ENCODE measurements at regions of chr17 and their contacts with region 1.

Region 1: DNA sequence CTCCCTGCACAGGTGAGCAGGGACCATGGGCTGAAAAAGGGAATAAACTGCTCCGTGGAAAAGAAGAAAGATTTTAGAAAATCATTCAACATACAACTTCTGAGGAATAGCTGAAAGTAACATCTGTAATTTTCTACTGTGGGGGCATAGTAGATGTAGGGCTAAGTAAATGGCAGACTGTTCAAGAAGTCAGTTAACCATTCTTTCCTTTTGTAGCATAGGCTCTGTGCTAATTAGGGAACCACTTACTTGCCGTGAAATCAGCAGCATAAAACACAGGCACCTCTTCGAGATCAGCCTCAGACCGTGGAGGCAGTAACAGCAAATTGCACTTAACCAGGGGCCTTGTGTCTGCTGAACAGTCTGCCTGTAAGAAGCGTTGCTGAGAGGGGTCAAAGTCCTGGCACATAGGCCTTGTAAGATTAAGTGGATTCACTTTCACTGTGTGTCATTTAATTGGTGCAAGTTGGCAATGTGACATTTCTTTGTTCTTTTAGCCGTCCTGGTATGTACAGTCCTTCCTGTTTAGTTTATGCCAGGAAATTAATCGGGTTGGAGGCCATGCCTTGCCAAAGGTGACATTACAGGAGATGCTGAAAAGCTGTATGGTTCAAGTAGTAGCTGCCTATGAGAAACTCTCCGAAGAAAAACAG is 10.4 kb downstream of the COG1 start:
- DNase-seq: no peak
- H3K4me3 Mint-ChIP-seq: no peak overlapping the region
- H3K27ac Mint-ChIP-seq: peak overlapping the region; percentile 81
- H3K4me1 Mint-ChIP-seq: peaks cover 25% of the 10 kb centered on the region
- H3K27me3 Mint-ChIP-seq: no peaks in the 10 kb centered on the region

Region 2: GRCh38 chr17:72976971-72977770 is 226.1 kb before region 1 on chr17:
- CTCF ChIA-PET with region 1: no interaction called
- POLR2A ChIA-PET with region 1: no interaction called
- DNase-seq: no peak
- H3K4me3 Mint-ChIP-seq: no peak overlapping the region
- H3K27ac Mint-ChIP-seq: no peak overlapping the region
- H3K4me1 Mint-ChIP-seq: peaks cover 9% of the 10 kb centered on the region
- H3K27me3 Mint-ChIP-seq: no peaks in the 10 kb centered on the region

Region 3: DNA sequence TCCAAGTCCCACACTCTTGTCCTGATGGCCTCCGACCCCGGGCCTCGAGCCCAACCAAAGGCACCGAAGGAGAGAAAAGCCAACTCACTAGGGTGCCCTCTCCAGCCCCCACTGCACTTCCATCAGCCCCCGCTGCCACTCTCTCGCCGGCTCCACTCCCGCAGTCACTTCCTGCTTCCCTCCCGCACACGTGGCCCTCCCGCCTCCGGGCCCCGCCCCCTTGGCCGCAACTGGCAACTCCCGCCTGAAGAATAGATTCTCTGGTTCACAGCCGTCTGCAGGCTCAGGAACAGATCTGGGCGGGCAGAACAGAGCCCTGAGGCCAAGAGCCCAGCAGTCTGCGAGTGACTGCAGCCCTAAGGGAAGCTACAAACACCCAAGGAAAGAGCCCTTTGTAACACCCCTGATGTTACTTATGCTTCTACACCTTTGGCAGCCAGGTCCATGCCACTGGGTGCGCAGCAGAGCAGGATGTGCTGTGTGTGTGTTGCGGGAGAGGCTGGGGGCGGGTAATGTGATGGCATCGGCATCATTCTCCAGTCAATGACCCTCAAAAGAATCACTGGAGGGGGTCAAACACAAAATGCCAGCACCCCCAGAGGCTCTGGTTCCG is 110.6 kb before region 1 on chr17 and contains the start of gene SLC39A11:
- CTCF ChIA-PET with region 1: no interaction called
- POLR2A ChIA-PET with region 1: no interaction called
- DNase-seq: peak; percentile 92
- H3K4me3 Mint-ChIP-seq: peak within 1 kb of the TSS; percentile 97
- H3K27ac Mint-ChIP-seq: peak within 1 kb of the TSS; percentile 93
- H3K4me1 Mint-ChIP-seq: peaks cover 23% of the 10 kb centered on the region
- H3K27me3 Mint-ChIP-seq: peaks cover 8% of the 10 kb centered on the region
- total RNA-seq, gene SLC39A11: 19.5 to 23.4 TPM

Region 4: DNA sequence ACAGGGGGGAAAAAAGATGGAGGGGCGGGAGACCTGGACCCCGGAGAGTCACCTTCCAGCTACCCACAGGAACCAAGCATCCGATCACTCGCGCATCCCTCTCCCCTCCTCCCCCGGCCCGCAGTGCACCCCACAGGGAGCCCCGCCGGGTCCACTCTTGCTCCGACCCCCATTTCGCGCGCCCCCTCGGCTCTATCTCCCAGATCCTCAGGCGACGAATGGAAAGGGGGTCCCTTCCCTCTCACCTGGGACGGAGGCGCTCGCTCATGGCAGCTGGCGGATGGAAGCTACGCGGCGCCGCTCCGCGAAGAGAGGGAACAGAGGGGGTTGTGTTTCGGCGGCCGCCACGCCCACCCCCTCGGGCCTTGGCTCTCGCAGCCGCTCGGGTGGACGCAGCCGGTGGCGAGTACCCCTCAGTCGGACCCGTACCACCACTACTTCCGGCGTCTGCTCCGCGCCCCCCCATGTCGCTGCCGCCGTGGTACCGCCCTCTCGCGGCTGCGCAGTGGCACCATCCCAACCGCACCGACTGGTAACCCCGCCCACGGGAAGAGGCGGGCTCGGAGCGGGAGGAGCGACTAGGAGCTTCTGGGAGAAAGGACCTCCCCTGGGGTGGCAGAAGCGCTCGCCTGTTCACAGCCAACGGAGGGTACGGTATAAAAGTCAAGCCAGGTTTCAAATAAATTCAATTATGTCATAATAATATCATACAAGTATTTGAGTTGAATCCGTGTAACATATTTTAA is 28.8 kb after region 1 on chr17:
- CTCF ChIA-PET with region 1: interaction called, 10 read pairs
- POLR2A ChIA-PET with region 1: interaction called, 3 read pairs
- DNase-seq: peak; percentile 96
- H3K4me3 Mint-ChIP-seq: peak overlapping the region; percentile 95
- H3K27ac Mint-ChIP-seq: peak overlapping the region; percentile 96
- H3K4me1 Mint-ChIP-seq: peaks cover 67% of the 10 kb centered on the region
- H3K27me3 Mint-ChIP-seq: no peaks in the 10 kb centered on the region

Measured in activated CD4-positive, alpha-beta T cell treated with anti-CD3 and anti-CD28 coated beads, Interleukin-2, amount 10 ng/mL, durations not matched to agents 7 days and 5 days (primary cell).